H1 (cell line): ENCODE measurements at regions of chr9 and their contacts with region 1.

Region 1: GRCh38 chr9:104177003-104177611 is 83.0 kb downstream of the SMC2 start:
- DNase-seq: no peak
- H3K4me3 ChIP-seq: no peak overlapping the region
- H3K27ac ChIP-seq: no peak overlapping the region
- H3K4me1 ChIP-seq: no peaks in the 10 kb centered on the region
- H3K27me3 ChIP-seq: no peaks in the 10 kb centered on the region
- CTCF ChIP-seq: peak in 2 of 3 experiments; percentile 57 to 58; a peak in 3 of 4 replicates
- EP300 ChIP-seq: no peak
- POLR2A ChIP-seq: no peak
- RAD21 ChIP-seq: peak; percentile 80

Region 2: GRCh38 chr9:103919605-103920209 is 257.4 kb before region 1 on chr9:
- CTCF ChIA-PET with region 1: no interaction called
- POLR2A ChIA-PET with region 1: no interaction called
- DNase-seq: no peak
- H3K4me3 ChIP-seq: no peak overlapping the region
- H3K27ac ChIP-seq: no peak overlapping the region
- H3K4me1 ChIP-seq: no peaks in the 10 kb centered on the region
- H3K27me3 ChIP-seq: no peaks in the 10 kb centered on the region
- CTCF ChIP-seq: no peak
- EP300 ChIP-seq: no peak
- POLR2A ChIP-seq: no peak
- RAD21 ChIP-seq: no peak

Region 3: GRCh38 chr9:104138243-104138868 is 38.8 kb before region 1 on chr9:
- CTCF ChIA-PET with region 1: no interaction called
- POLR2A ChIA-PET with region 1: no interaction called
- DNase-seq: no peak
- H3K4me3 ChIP-seq: no peak overlapping the region
- H3K27ac ChIP-seq: no peak overlapping the region
- H3K4me1 ChIP-seq: no peaks in the 10 kb centered on the region
- H3K27me3 ChIP-seq: no peaks in the 10 kb centered on the region
- CTCF ChIP-seq: no peak
- EP300 ChIP-seq: no peak
- POLR2A ChIP-seq: no peak
- RAD21 ChIP-seq: no peak

Region 4: GRCh38 chr9:104206766-104207165 is 29.7 kb after region 1 on chr9:
- CTCF ChIA-PET with region 1: no interaction called
- POLR2A ChIA-PET with region 1: no interaction called
- DNase-seq: no peak
- H3K4me3 ChIP-seq: no peak overlapping the region
- H3K27ac ChIP-seq: no peak overlapping the region
- H3K4me1 ChIP-seq: peaks cover 0 to 2% (median 0%) of the 10 kb centered on the region in 4 experiments; a peak in 1 of 7 replicates
- H3K27me3 ChIP-seq: no peaks in the 10 kb centered on the region
- CTCF ChIP-seq: no peak
- EP300 ChIP-seq: no peak
- POLR2A ChIP-seq: no peak
- RAD21 ChIP-seq: no peak

Region 5: GRCh38 chr9:104386425-104387069 is 209.4 kb after region 1 on chr9:
- CTCF ChIA-PET with region 1: interaction called, 133 read pairs
- POLR2A ChIA-PET with region 1: no interaction called
- DNase-seq: no peak
- H3K4me3 ChIP-seq: no peak overlapping the region
- H3K27ac ChIP-seq: no peak overlapping the region
- H3K4me1 ChIP-seq: no peaks in the 10 kb centered on the region
- H3K27me3 ChIP-seq: no peaks in the 10 kb centered on the region
- CTCF ChIP-seq: peak in 2 of 3 experiments; percentile 57 to 73; a peak in 2 of 4 replicates
- EP300 ChIP-seq: no peak
- POLR2A ChIP-seq: no peak
- RAD21 ChIP-seq: peak; percentile 92 to 94